Posterior vena cava (tissue), 2 donors: ENCODE measurements at regions of chr18 and their contacts with region 1.

Region 1: GRCh38 chr18:69330370-69331005 is 70.2 kb upstream of the DOK6 start:
- DNase-seq: no peak

Region 2: DNA sequence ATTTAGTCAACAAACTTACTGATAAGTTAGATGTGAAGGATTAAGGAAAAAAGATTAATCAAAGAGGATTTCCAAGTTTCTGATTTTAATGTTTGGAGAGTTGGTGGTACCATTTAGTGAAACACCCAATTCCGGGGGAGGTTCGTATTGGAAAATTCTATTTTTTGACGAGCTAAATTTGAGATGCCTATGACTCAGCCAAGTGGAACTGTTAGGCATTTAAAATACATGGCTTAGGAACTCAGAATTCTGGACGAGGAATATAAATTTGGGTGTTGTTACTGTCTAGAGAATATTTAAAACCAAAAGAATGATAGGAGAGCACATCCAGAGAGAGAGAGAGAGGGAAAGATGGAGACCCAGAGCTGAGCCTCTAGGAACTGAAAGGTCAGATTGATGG is 719.2 kb before region 1 on chr18:
- intact Hi-C with region 1: loop called in 1 of 2 experiments (anchors 10 kb)
- DNase-seq: no peak

Region 3: GRCh38 chr18:69282371-69282770 is 48.1 kb before region 1 on chr18:
- intact Hi-C with region 1: no loop called
- DNase-seq: no peak